ENCODE measurements at regions of chr11 and their contacts with region 1.

Region 1: GRCh38 chr11:93548679-93549319 is 5.6 kb upstream of the SMCO4 start:
- DNase-seq: no peak
- H3K4me3 ChIP-seq: no peak overlapping the region
- H3K27ac ChIP-seq: no peak overlapping the region
- H3K4me1 ChIP-seq: peaks cover 0 to 6% (median 4%) of the 10 kb centered on the region in 4 donors
- H3K27me3 ChIP-seq: no peaks in the 10 kb centered on the region
- CTCF ChIP-seq: no peak
- EP300 ChIP-seq: no peak
- POLR2A ChIP-seq: no peak

Region 2: GRCh38 chr11:93652161-93652597 is 103.4 kb after region 1 on chr11:
- intact Hi-C with region 1: loop called (anchors 5 kb)
- DNase-seq: peak; percentile 42
- H3K4me3 ChIP-seq: no peak overlapping the region
- H3K27ac ChIP-seq: no peak overlapping the region
- H3K4me1 ChIP-seq: peaks cover 0 to 6% (median 0%) of the 10 kb centered on the region in 4 donors
- H3K27me3 ChIP-seq: peaks cover 0 to 3% (median 0%) of the 10 kb centered on the region in 4 donors
- CTCF ChIP-seq: peak; percentile 62 to 73 (median 71)
- EP300 ChIP-seq: no peak
- POLR2A ChIP-seq: no peak